ENCODE measurements at regions of chr5 and their contacts with region 1.

Region 1: DNA sequence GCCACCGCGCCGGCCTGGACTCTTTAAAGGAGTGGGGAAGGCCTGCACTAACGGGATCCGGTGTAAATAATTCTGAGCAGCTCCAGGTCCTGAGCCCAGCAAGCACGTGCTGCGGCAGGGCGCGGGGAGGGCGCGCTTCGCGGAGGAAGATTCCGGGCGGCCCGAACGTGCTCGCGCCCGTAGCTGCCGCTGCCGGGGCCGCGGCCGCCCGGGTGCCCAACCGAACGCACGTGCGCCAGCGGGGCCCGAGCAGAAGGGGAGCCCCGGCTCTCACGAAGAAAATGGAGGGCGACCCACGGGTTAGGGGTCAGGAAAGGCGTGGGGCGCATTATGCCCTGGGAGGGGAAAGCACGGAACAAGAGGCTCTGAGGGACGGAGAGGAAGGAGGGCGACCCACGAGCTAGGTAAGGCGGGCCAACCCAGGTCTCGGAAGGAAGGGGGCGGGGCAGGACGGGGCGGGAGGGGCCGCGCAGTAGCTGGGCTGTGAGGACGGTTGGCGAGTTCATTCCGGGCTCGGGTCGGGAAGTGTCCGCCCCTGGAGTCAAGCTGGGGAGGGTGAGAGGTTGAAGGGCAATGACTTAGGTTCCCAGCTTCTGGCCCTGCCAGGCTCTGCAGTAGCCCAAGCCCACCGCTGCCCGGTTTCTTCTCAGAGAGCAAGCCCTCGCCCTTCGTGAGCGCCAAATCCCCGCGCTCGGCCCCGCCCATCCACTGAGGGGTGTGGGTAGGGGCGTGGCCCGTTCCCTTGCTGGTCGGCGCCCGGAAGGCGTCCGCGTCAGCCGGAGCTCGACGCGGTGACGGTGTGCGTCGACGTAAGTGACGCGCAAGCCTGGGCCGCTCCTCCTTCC is at the start of gene ZNF131:
- DNase-seq: peak; percentile 87
- ATAC-seq: peak; percentile 93
- H3K4me3 ChIP-seq: peak within 1 kb of the TSS; percentile 96
- H3K27ac ChIP-seq: peak within 1 kb of the TSS; percentile 94
- H3K4me1 ChIP-seq: peaks cover 10% of the 10 kb centered on the region
- H3K27me3 ChIP-seq: peaks cover 0 to 1% of the 10 kb centered on the region in 2 experiments; a peak in 1 of 4 replicates
- CTCF ChIP-seq: no peak
- EP300 ChIP-seq: peak in 1 of 2 experiments; percentile 25; a peak in 1 of 4 replicates
- POLR2A ChIP-seq: peak; percentile 87
- RAD21 ChIP-seq: no peak
- polyA plus RNA-seq, gene ZNF131: 16.4 to 23.3 TPM

Region 2: DNA sequence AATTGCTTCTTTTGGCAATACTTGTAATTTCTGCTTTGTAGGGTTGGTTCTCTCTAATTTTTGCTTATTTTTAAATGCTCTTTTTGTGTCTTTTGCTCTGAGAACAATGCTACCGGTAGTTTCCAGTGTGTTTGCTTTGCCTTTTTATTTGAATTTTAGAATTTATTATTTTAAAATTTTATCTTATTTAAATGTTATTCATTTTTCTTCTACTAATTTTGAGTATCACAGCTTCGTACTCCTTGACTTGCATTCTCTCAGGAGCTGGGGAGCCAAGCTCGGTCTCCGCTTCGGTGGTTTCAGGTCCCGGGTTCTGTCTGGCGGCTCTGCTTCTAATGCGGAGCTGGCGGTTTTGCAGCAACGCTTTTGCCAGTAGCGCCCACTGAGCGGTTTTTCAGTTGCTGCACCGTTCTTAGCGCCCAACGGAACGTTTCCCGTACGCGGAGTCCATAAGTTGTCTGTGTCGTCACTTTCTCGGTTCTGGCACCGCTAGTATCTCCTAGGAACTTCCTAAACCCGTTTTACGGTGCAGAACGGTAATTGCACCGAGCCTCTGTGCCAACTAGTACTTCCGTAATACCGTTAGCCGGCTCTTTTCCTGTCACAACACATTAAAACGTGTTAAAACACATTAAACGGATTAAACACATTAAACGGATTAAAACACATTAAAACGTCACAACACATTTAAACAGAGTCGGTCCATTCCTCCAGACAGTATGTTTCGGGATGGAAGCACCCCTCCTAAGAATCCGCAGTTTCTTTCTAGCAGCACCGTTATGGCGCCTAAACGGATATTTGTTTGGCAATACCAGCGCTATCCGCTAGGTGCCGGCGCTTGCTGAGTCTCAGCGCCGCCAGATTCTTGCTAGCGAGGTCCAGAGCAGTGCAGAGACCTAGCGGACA is 126.4 kb before region 1 on chr5:
- CTCF ChIA-PET with region 1: interaction called, 6 read pairs
- POLR2A ChIA-PET with region 1: no interaction called
- RAD21 ChIA-PET with region 1: interaction called, 3 read pairs
- SMC1A ChIA-PET with region 1: no interaction called
- in situ Hi-C with region 1: no loop called
- intact Hi-C with region 1: loop called (anchors 2 kb)
- DNase-seq: no peak
- ATAC-seq: peak; percentile 72
- H3K4me3 ChIP-seq: peak overlapping the region; percentile 82
- H3K27ac ChIP-seq: peak overlapping the region; percentile 94
- H3K4me1 ChIP-seq: peaks cover 12% of the 10 kb centered on the region
- H3K27me3 ChIP-seq: no peaks in the 10 kb centered on the region
- CTCF ChIP-seq: peak; percentile 89 to 94 (median 90)
- EP300 ChIP-seq: 0 out of 4 replicates have a peak, but pooled peaks of 1 of the 2 experiments have one; percentile 13
- POLR2A ChIP-seq: 0 out of 2 replicates have a peak, but pooled peaks have one; percentile 29
- RAD21 ChIP-seq: peak; percentile 75

Region 3: GRCh38 chr5:43066799-43067741 is 53.9 kb before region 1 on chr5:
- CTCF ChIA-PET with region 1: interaction called, 6 read pairs
- POLR2A ChIA-PET with region 1: interaction called, 7 read pairs
- RAD21 ChIA-PET with region 1: interaction called, 8 read pairs
- SMC1A ChIA-PET with region 1: no interaction called
- in situ Hi-C with region 1: no loop called
- intact Hi-C with region 1: loop called (anchors 2 kb)
- DNase-seq: peak; percentile 74
- ATAC-seq: peak; percentile 58
- H3K4me3 ChIP-seq: peak overlapping the region; percentile 91
- H3K27ac ChIP-seq: peak overlapping the region; percentile 100
- H3K4me1 ChIP-seq: peaks cover 10% of the 10 kb centered on the region
- H3K27me3 ChIP-seq: no peaks in the 10 kb centered on the region
- CTCF ChIP-seq: no peak
- EP300 ChIP-seq: peak in 1 of 2 experiments; percentile 100; a peak in 2 of 4 replicates
- POLR2A ChIP-seq: peak; percentile 47; the same call in 1 of the 2 replicates
- RAD21 ChIP-seq: no peak

Region 4: DNA sequence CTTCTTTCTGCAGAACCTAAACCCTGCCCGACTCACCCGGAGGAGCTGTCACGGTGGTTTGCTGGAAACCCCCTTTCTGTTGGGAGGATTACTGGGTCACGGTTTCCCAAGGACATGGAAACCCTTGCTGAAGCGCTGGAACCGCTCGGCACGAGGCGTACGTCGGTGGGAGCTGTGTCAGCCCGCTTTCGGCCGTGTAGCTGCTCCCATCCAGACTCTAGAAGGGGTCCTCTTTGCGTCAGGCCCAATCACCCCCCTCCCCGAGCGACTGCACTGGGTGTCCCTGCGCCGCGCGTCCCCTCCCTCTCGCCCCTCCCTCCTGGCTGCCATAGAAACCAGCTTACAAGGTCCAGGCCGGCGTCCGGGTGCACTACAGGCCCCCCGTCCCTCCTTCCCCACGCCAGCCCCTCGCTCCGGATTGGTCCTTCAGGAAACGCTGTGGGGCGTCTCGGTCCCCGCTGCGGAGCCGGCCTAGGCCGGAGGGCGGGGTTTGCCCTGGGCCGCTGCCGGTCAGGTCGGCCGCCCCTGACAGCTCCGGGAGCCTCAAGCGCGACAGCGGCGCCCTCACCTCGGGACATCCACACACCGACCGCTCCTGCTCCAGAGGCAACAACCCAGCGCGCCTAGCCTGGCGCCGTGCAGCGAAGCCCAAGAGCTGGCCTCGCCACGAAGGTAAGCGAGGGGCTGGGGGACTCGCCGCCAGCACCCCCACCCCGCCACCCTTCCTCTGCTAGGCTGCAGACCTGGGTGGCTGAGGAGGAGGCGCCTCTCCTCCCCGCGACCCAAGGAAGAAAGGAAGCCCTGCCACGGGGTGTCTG is 71.0 kb after region 1 on chr5 and contains the start of gene NIM1K:
- CTCF ChIA-PET with region 1: no interaction called
- POLR2A ChIA-PET with region 1: no interaction called
- RAD21 ChIA-PET with region 1: no interaction called
- SMC1A ChIA-PET with region 1: no interaction called
- in situ Hi-C with region 1: no loop called
- intact Hi-C with region 1: loop called (anchors 2 kb)
- DNase-seq: no peak
- ATAC-seq: peak; percentile 87
- H3K4me3 ChIP-seq: peak within 1 kb of the TSS; percentile 90
- H3K27ac ChIP-seq: no peak within 1 kb of the TSS; the same call in 1 of the 2 replicates
- H3K4me1 ChIP-seq: peaks cover 12% of the 10 kb centered on the region
- H3K27me3 ChIP-seq: no peaks in the 10 kb centered on the region
- CTCF ChIP-seq: no peak
- EP300 ChIP-seq: no peak
- POLR2A ChIP-seq: no peak
- RAD21 ChIP-seq: no peak
- polyA plus RNA-seq, gene NIM1K: 0.27 to 0.35 TPM

Region 5: DNA sequence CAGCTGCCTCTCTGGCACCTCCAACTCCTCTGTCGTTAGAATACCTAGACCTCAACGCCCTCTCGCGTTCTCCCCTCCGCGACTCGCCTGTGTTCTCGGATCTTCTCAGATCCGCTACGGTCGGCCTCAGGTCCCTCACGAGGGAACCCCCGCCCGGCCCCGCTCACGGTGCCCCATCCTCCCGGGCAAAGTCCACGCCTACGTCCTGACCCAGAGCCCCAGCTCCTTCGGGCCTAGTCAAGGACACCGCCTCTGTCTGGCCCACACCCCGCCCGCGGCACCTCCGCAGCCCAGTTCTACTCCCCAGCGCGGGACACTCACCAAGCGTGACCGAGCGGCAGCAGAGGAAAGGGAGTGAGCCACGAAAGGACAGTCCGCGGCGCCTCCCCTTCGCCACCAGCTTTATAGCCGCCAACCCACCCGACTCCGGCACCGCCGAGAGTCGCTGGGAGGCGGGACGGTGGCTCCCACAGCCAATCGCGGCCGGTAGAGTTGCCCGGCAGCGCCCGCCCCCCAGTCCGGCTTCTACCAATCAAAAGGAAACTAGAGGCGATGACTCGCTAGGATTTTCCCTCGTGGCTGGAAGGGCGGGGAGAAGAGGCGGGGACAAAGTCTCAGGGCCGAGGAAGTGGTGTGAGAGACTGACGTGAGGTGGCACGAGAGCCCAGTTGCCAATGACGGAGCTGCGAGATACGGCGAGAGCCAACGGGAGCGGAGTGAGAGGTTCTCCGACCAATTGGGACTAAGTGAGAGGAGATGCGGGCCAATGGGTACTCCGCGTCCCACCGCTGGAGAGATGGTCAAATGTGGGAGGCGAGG is 192.3 kb after region 1 on chr5 and contains the start of gene HMGCS1:
- CTCF ChIA-PET with region 1: interaction called, 24 read pairs
- POLR2A ChIA-PET with region 1: interaction called, 46 read pairs
- RAD21 ChIA-PET with region 1: interaction called, 38 read pairs
- SMC1A ChIA-PET with region 1: interaction called, 4 read pairs
- in situ Hi-C with region 1: no loop called
- intact Hi-C with region 1: loop called (anchors 5 kb)
- DNase-seq: peak; percentile 100
- ATAC-seq: peak; percentile 92
- H3K4me3 ChIP-seq: peak within 1 kb of the TSS; percentile 79
- H3K27ac ChIP-seq: peak within 1 kb of the TSS; percentile 84
- H3K4me1 ChIP-seq: peaks cover 6% of the 10 kb centered on the region
- H3K27me3 ChIP-seq: no peaks in the 10 kb centered on the region
- CTCF ChIP-seq: peak in 2 of 3 experiments; percentile 6 to 16; a peak in 1 of 6 replicates
- EP300 ChIP-seq: peak in 1 of 2 experiments; percentile 60; a peak in 1 of 4 replicates
- POLR2A ChIP-seq: peak; percentile 99
- RAD21 ChIP-seq: peak; percentile 23; the same call in 1 of the 2 replicates
- polyA plus RNA-seq, gene HMGCS1: 74.9 to 94.1 TPM